Activated naive CD4-positive, alpha-beta T cell treated with anti-CD3 and anti-CD28 coated beads for 36 hours (primary cell): ENCODE measurements at regions of chr4 and their contacts with region 1.

Region 1: DNA sequence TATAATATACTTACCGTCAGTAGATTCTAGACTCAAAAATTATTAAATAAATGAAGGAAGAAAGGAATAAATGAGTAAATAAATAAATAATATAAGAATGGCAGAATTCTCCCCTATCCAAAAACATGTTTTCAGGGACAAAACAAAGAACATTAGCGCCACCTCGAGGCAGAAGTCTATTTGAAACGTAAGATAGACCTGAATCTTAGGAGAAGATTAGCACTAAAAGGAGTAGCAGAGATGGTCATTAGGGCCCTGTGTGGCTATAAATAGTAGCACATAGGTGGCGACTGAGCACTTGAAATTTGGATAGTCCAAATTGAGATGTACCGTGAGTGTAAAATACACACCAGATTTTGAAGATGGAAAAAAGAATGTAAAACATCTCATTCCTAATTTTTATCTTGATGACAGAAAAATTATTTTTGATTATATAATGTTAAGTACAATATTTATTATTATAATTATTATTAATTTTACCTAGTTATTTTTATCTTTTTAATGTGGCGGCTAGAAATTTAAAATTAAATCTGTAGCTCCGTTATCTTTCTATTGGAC is 24.3 kb upstream of the SRD5A3 start:
- DNase-seq: peak; percentile 93
- H3K4me3 Mint-ChIP-seq: no peak overlapping the region
- H3K27ac Mint-ChIP-seq: no peak overlapping the region
- H3K4me1 Mint-ChIP-seq: peaks cover 52% of the 10 kb centered on the region
- H3K27me3 Mint-ChIP-seq: no peaks in the 10 kb centered on the region

Region 2: GRCh38 chr4:54322818-54323417 is 998.9 kb before region 1 on chr4:
- CTCF ChIA-PET with region 1: no interaction called
- intact Hi-C with region 1: loop called (anchors 2 kb)
- DNase-seq: peak; percentile 78
- H3K4me3 Mint-ChIP-seq: no peak overlapping the region
- H3K27ac Mint-ChIP-seq: no peak overlapping the region
- H3K4me1 Mint-ChIP-seq: no peaks in the 10 kb centered on the region
- H3K27me3 Mint-ChIP-seq: no peaks in the 10 kb centered on the region

Region 3: DNA sequence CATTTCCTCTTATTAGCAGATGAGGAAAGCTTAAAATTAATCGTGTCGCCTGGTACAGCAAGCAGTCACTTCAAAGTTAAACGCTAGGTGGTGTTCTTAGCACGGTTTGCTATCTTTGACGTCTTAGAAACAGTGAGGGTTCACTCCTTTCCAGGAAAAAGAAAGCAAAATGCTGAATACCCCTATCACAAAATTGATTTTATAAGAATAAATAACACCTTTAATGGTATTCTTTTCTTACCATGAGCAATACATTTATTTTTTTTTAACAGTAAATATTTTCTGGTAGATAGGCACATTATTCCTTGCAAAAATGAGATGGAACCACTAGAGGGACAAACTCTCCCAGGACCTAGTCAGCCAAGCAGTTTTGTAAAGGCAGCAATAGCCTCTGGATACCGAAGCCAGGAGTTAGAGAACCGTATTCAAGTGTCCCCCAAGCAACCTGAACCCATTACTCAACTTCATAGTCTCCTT is 350.3 kb before region 1 on chr4:
- CTCF ChIA-PET with region 1: interaction called, 50 read pairs
- intact Hi-C with region 1: loop called (anchors 1 kb)
- DNase-seq: peak; percentile 27
- H3K4me3 Mint-ChIP-seq: no peak overlapping the region
- H3K27ac Mint-ChIP-seq: no peak overlapping the region
- H3K4me1 Mint-ChIP-seq: peaks cover 2% of the 10 kb centered on the region
- H3K27me3 Mint-ChIP-seq: peaks cover 5% of the 10 kb centered on the region

Region 4: DNA sequence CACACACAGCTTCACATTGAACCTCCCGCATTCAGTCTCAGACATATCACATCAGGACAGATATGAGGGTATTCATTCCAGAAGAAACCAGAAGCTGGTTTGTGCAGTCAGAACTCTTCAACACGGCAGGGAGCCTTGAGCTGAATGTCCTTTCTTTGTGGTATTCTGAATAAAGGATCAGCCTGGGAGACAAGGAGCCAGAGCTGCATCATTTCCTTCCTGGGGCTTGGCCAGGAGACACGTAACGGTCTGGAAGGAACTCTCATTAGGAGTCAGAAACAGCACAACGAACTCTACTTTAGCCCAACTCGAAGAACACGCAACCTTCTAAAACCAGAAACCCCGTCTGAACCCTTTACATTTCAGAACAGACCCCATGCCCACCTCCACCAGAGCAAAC is 242.8 kb before region 1 on chr4:
- CTCF ChIA-PET with region 1: no interaction called
- intact Hi-C with region 1: loop called (anchors 5 kb)
- DNase-seq: no peak
- H3K4me3 Mint-ChIP-seq: no peak overlapping the region
- H3K27ac Mint-ChIP-seq: no peak overlapping the region
- H3K4me1 Mint-ChIP-seq: peaks cover 10% of the 10 kb centered on the region
- H3K27me3 Mint-ChIP-seq: peaks cover 27% of the 10 kb centered on the region

Region 5: GRCh38 chr4:55546756-55547465 is 225.1 kb after region 1 on chr4 and contains the start of gene CLOCK:
- CTCF ChIA-PET with region 1: no interaction called
- intact Hi-C with region 1: loop called (anchors 1 kb)
- DNase-seq: peak; percentile 83
- H3K4me3 Mint-ChIP-seq: peak within 1 kb of the TSS; percentile 84
- H3K27ac Mint-ChIP-seq: peak within 1 kb of the TSS; percentile 89
- H3K4me1 Mint-ChIP-seq: peaks cover 50% of the 10 kb centered on the region
- H3K27me3 Mint-ChIP-seq: no peaks in the 10 kb centered on the region
- total RNA-seq, gene CLOCK: 8.1 to 8.5 TPM